BJ (cell line): ENCODE measurements at regions of chr10 and their contacts with region 1.

Region 1: GRCh38 chr10:92074126-92074887 is 150.7 kb downstream of the BTAF1 start:
- DNase-seq: no peak
- H3K4me3 ChIP-seq: no peak overlapping the region
- H3K27me3 ChIP-seq: no peaks in the 10 kb centered on the region
- CTCF ChIP-seq: no peak

Region 2: DNA sequence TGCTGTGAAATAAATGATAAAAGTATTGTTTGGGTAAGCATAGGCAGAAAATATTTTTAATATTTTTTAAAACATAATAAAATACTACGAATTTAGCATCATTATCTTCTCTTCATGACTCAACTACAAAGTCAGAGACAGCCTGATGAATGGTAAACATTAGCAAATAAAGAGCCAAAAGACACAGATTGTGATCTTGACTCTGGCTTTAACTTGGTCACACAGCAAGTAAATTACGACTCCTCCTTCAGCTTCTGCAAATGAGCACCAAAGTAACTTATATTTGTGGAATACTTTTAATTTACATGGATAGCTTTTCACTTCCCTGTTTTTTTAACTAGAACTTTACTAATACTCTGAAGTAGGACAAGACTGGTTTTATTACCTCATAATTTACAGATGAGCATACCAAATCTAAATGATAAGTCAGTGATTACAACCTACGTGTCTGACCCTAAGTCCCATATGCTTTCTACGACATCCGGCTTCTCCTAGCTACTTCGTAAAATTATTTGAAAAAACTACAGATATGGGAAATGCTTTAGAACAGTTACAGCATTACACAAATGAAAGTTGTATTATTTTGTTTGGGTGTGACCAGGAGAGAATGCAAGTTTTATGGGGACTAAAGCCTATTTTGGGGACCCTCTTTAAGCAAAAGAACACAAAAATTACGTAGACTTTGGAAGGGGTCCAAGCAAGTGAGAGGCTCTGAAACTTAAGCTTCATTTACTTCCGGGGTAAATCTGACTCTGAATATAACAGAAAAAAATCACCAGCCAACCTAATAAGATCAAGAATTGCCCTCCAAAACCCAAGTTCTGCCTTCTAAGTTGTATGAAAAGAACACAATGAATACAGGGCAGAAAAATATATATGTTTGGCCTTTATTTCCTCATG is 82.8 kb after region 1 on chr10:
- CTCF ChIA-PET with region 1: no interaction called
- POLR2A ChIA-PET with region 1: interaction called, 12 read pairs
- DNase-seq: no peak
- H3K4me3 ChIP-seq: no peak overlapping the region
- H3K27me3 ChIP-seq: no peaks in the 10 kb centered on the region
- CTCF ChIP-seq: no peak

Region 3: DNA sequence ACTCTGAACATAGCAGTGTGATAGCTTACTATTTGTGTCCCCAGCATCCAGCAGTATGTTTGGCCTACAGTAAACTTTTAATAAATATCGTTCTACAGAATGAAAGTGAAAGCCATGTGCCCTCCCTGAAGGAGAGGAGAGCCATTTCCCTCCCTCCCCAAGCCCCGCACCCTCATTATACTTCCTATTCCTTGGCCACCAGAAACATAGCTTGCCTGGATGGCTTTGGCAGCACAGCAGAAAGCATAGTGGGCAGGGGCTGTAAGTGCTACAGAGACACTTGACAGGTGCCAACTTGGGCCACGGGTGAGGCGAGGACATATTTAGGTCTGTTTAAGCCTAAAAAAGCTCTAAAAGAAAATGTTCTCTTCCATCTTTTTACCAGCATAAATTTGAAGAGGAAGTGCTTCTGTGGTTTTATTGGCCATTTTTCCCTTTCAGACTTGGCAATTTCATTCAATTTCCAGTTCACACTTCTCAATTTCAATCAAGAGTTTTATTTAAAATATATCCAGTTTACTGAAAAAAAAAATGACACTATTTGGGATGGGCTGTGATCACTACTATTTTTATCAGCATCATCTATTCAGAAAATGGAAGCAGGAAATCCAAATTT is 628.1 kb after region 1 on chr10:
- CTCF ChIA-PET with region 1: no interaction called
- POLR2A ChIA-PET with region 1: no interaction called
- DNase-seq: no peak
- H3K4me3 ChIP-seq: no peak overlapping the region
- H3K27me3 ChIP-seq: no peaks in the 10 kb centered on the region
- CTCF ChIP-seq: no peak